Dendritic cell treated with granulocyte-macrophage colony-stimulating factor and Interleukin-4, amounts not matched to agents 40 ng/mL and 50 ng/mL, for 4 days (primary cell): ENCODE measurements at regions of chr1 and their contacts with region 1.

Region 1: DNA sequence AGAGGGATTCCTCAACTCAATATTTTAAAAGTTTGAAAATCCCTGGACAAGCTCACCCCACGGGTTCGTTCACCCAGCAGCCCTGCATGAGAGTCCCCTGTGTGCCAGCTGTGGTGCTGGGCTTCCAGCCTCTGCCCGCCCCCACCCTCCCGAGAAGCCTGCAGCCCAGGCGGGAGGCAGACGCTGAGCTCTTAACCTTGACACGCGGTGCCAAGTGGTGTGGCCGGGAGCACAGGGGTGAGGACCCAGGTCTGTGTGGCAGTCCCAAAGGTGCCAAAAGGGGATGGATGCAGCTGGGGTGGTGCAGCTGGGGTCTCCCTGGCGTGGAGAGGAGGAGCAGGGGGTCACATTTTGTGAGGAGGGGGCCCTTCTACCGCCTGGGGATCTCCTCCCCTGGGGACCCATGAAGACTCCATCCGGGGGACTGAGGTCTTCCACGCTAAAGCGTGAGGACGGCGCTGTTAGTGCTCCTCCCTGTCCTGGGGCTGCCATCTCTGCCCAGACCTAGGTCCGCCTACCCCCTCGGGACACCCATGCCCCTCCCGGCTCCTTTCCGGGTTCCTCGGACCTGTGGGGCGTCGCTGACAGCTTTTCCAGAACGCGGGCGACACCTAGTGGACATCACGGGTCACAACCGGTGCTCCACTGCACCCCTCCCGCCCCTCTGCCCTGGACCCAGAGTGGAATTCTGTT is 12.9 kb downstream of the PLA2G2F start:
- H3K4me3 Mint-ChIP-seq: peak overlapping the region; percentile 50
- H3K27ac Mint-ChIP-seq: peak overlapping the region; percentile 78
- H3K4me1 Mint-ChIP-seq: peaks cover 28% of the 10 kb centered on the region
- H3K27me3 Mint-ChIP-seq: peaks cover 29% of the 10 kb centered on the region

Region 2: GRCh38 chr1:19918057-19918456 is 234.0 kb before region 1 on chr1:
- intact Hi-C with region 1: loop called (anchors 2 kb)
- H3K4me3 Mint-ChIP-seq: no peak overlapping the region
- H3K27ac Mint-ChIP-seq: no peak overlapping the region
- H3K4me1 Mint-ChIP-seq: no peaks in the 10 kb centered on the region
- H3K27me3 Mint-ChIP-seq: peaks cover 2% of the 10 kb centered on the region

Region 3: DNA sequence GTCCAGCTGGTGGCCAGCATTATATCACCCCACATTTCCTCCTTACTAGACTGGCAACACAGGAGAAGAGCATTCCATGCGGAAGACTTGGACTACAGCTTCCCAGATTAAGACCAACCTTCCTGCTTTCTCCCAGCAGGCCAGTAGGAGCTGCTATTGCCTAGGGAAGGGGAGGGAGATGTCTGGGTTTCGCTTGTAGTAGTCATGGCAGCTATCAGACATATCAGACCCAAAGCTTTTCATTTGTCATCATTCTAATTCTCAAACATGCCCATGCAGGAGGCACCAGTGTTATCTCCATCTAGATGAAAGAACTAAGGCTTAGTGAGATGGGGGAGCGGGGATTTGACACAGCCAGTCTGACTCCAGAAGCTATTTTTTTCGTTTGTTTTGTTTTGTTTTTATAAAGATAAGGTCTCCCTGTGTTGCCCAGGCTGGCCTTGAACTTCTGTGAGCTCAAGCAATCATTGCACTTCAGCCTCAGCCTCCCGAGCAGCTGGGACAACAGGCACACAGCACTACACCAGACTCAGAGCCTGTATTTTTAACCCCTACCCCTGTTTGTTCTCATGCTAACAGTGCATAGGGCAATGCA is 177.1 kb before region 1 on chr1:
- intact Hi-C with region 1: loop called (anchors 2 kb)
- H3K4me3 Mint-ChIP-seq: no peak overlapping the region
- H3K27ac Mint-ChIP-seq: no peak overlapping the region
- H3K4me1 Mint-ChIP-seq: no peaks in the 10 kb centered on the region
- H3K27me3 Mint-ChIP-seq: peaks cover 53% of the 10 kb centered on the region

Region 4: DNA sequence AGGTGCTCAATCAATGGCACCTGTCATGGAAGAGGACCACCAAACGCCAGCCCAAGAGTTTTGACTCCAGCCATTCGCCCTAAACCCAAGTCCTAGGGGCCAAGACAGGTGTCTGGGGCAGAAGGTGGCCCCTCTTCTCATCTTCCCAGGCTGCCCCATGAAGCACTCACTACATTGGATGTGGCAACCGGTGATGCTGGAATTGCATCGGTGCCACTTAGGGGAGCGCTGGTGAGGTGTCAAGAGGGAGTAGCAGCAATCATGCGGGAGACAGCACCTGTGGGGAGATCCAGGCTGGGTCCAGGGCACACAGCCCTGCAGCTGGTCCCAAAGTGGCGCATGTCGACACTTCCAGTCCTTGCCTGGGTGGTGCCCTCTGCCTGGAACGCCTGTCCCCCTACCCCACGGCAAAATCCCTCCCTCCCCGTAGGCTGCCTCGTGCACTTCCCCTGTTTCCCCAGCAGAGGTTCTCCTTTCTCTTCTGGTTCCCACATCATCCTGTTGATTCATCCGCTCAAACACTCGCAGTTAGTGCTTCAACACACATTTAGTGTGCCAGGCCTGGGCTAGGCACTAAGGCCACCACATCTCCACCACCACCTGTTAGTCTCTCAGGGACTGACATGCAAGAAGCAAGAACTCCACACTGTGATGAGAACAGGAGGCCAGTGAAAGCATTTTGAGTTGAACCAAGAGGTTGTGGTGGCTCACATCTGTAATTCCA is 51.3 kb before region 1 on chr1:
- intact Hi-C with region 1: loop called (anchors 1 kb)
- H3K4me3 Mint-ChIP-seq: no peak overlapping the region
- H3K27ac Mint-ChIP-seq: no peak overlapping the region
- H3K4me1 Mint-ChIP-seq: peaks cover 16% of the 10 kb centered on the region
- H3K27me3 Mint-ChIP-seq: peaks cover 58% of the 10 kb centered on the region